GM12878 (cell line): ENCODE measurements at regions of chr9 and their contacts with region 1.

Region 1: DNA sequence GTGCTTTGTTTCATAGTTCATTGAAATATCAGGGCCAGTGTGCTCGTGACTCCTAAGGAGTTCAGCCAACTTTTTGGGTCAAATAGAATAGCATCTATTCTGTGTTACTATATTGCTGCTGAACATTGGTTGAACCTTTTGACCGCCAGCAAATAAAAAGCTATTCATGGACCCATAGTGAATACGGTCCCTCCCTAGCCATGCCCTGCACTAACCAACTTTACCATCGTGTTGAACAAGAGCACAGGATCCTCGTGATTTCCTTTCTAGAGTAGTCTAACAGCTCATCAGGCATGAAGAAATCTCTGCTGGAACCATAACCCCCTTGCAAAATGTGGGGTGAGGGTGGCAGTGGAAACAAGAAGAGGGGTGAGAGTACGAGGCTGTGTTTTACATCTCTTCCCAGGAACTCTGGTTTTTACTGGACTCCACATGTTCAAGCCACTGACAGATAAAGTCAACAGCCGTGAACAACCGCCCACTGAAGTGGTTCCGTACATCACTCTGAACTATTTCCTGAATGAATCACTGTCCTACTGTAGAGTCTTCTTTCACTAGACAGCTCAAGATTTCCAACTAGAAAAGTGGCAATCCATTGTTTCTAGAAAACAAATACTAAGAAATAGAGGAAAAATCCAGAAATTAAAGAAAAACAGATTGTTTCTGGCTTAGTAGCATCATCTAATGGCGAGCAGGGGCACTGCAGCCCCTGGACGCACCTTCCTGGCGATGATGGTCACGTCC is 70.1 kb upstream of the SPATA31E1 start:
- DNase-seq: no peak
- ATAC-seq: no peak
- H3K4me3 ChIP-seq: no peak overlapping the region
- H3K27ac ChIP-seq: no peak overlapping the region
- H3K4me1 ChIP-seq: no peaks in the 10 kb centered on the region
- H3K27me3 ChIP-seq: no peaks in the 10 kb centered on the region; a peak in 1 of 4 replicates
- CTCF ChIP-seq: peak; percentile 67 to 82 (median 80)
- EP300 ChIP-seq: no peak
- POLR2A ChIP-seq: no peak
- RAD21 ChIP-seq: peak; percentile 59

Region 2: DNA sequence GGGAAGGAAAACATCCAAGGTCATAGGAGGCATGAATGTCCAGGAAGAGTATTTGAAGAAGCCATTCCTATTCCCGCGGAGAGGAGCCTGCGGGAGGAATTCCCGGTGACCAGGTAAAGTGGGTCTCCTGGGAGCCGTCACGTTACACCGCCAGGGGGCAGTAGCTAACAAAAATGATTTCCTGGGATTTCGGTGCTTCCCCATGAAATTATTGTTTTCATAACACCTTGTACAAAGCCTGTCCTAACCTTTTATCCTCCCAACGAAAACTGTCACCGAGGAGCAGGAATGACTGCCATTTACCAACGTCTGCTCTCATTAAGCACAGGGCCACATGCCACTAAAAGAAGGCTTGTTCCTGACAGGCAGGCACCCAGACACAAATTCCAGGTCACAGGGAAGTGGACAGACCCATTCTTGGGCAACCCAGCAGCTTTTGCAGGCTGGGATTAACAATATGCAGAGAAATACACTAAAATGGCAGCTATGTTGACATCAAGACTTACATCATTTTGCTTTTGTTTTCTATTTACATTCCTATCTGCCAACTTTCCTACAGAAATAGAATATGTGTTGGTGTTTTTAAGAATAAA is 127.8 kb before region 1 on chr9:
- CTCF ChIA-PET with region 1: interaction called, 4 read pairs
- POLR2A ChIA-PET with region 1: no interaction called
- RAD21 ChIA-PET with region 1: no interaction called
- SMC1A ChIA-PET with region 1: interaction called, 3 read pairs
- in situ Hi-C with region 1: no loop called
- intact Hi-C with region 1: loop called (anchors 2 kb)
- DNase-seq: no peak
- ATAC-seq: peak; percentile 24; the same call in 2 of the 3 replicates
- H3K4me3 ChIP-seq: no peak overlapping the region
- H3K27ac ChIP-seq: no peak overlapping the region
- H3K4me1 ChIP-seq: no peaks in the 10 kb centered on the region
- H3K27me3 ChIP-seq: no peaks in the 10 kb centered on the region
- CTCF ChIP-seq: peak; percentile 30 to 43 (median 36); a peak in 2 of 6 replicates
- EP300 ChIP-seq: no peak
- POLR2A ChIP-seq: no peak
- RAD21 ChIP-seq: 0 out of 2 replicates have a peak, but pooled peaks have one; percentile 5